GM12878 (cell line): ENCODE measurements at regions of chr7 and their contacts with region 1.

Region 1: GRCh38 chr7:107115762-107116540 is 52.9 kb upstream of the HBP1 start:
- DNase-seq: no peak
- ATAC-seq: no peak
- H3K4me3 ChIP-seq: no peak overlapping the region
- H3K27ac ChIP-seq: no peak overlapping the region
- H3K4me1 ChIP-seq: no peaks in the 10 kb centered on the region
- H3K27me3 ChIP-seq: no peaks in the 10 kb centered on the region
- CTCF ChIP-seq: no peak
- EP300 ChIP-seq: no peak
- POLR2A ChIP-seq: no peak
- RAD21 ChIP-seq: no peak

Region 2: GRCh38 chr7:107103363-107103762 is 12.6 kb before region 1 on chr7:
- CTCF ChIA-PET with region 1: no interaction called
- POLR2A ChIA-PET with region 1: no interaction called
- RAD21 ChIA-PET with region 1: no interaction called
- SMC1A ChIA-PET with region 1: interaction called, 4 read pairs
- in situ Hi-C with region 1: no loop called
- intact Hi-C with region 1: loop called (anchors 1 kb)
- DNase-seq: no peak
- ATAC-seq: peak; percentile 39
- H3K4me3 ChIP-seq: no peak overlapping the region
- H3K27ac ChIP-seq: no peak overlapping the region
- H3K4me1 ChIP-seq: no peaks in the 10 kb centered on the region
- H3K27me3 ChIP-seq: no peaks in the 10 kb centered on the region
- CTCF ChIP-seq: no peak
- EP300 ChIP-seq: no peak
- POLR2A ChIP-seq: no peak
- RAD21 ChIP-seq: no peak